GM12878 (cell line): ENCODE measurements at regions of chr11 and their contacts with region 1.

Region 1: DNA sequence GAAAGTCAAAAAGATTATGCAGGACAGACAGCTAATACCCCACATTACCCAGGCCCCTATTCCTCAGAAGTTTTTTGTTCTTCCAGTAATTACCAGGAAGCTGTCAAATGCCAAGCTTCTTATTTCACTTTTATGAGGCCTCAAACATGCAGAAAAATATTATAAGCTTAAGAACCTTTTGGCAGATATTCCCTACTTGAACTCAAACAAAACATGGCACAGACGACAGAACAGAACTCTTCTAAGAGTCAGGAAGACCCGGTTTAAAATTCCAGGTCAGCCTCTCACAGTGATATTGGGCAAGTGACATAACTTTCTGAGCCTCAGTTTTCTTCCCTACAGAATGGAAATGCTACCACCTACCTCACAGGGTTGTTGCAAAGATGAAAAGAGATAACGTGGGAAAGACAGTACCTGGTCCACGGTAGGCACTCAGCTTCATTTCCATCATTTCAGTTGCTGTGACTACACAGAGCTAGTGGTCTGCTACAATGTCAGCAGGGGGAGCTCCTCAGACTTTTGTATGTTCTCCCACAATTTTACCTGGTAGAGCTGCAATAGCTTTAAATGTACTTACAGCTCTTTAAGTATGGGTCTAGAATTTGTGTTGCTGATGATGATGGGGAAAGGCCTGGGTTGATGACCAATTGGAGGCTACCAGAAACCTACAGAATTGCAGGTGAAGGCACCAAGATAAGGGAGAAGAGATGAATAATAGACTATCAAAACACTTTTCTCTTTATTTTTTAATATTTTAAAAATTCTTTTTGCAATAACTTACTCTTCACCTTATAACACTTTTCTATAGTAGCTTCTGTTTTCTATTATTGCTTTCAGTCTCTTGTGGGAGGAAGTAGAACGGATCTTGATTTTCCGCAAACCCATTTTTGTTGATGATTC is 98.3 kb upstream of the CHRM4 start:
- DNase-seq: no peak
- ATAC-seq: peak; percentile 93
- H3K4me3 ChIP-seq: no peak overlapping the region
- H3K27ac ChIP-seq: peak overlapping the region; percentile 37; the same call in 1 of the 2 replicates
- H3K4me1 ChIP-seq: peaks cover 8% of the 10 kb centered on the region
- H3K27me3 ChIP-seq: no peaks in the 10 kb centered on the region
- CTCF ChIP-seq: peak; percentile 68 to 80 (median 68)
- EP300 ChIP-seq: no peak
- POLR2A ChIP-seq: no peak
- RAD21 ChIP-seq: peak; percentile 62

Region 2: GRCh38 chr11:46392421-46393230 is 97.3 kb before region 1 on chr11:
- CTCF ChIA-PET with region 1: interaction called, 15 read pairs
- POLR2A ChIA-PET with region 1: interaction called, 6 read pairs
- RAD21 ChIA-PET with region 1: interaction called, 11 read pairs
- SMC1A ChIA-PET with region 1: interaction called, 24 read pairs
- in situ Hi-C with region 1: no loop called
- intact Hi-C with region 1: no loop called
- DNase-seq: no peak
- ATAC-seq: peak; percentile 85
- H3K4me3 ChIP-seq: peak overlapping the region; percentile 57; the same call in 1 of the 2 replicates
- H3K27ac ChIP-seq: no peak overlapping the region
- H3K4me1 ChIP-seq: peaks cover 6% of the 10 kb centered on the region
- H3K27me3 ChIP-seq: peaks cover 12 to 13% of the 10 kb centered on the region in 2 experiments
- CTCF ChIP-seq: no peak
- EP300 ChIP-seq: no peak
- POLR2A ChIP-seq: no peak
- RAD21 ChIP-seq: no peak

Region 3: DNA sequence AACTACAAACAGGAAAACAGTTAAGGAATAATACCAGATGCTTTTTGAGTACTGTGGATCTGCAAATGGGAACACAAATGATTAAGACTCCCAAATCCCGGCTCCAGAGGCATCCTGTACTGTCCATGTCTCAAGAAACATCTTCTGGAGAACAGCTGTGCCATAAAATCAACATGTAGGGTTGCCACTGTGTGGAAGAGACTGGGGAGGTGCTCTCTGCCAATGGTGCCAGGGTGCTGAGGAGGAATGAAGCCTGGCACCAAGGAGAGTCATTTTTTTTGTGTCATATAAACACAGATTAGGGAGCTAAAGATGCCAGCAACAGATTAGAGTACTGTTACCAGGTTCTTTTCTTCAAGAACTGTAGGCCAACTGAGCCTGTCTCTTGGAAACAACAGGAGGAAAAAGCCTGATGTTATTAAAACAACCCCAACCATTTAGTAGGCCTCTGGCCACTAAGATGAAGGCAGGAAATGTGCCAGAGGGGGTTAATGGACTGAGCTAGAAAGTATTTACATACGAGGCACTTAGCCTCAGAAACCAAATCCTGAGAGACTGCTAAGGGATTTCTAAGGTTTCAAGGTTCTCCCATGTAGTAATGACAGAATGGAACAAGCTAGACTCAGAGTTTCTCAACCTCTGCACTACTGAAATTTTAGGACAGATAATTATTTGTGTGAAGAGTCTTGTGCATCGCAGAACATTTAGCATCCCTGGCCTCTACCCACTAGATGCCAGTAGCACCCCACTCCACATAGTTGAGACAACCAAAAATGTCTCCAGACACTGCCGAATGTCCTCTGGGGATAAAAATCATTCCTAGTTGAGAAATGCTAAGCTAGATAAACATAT is 43.8 kb before region 1 on chr11:
- CTCF ChIA-PET with region 1: interaction called, 39 read pairs
- POLR2A ChIA-PET with region 1: interaction called, 6 read pairs
- RAD21 ChIA-PET with region 1: interaction called, 24 read pairs
- SMC1A ChIA-PET with region 1: interaction called, 171 read pairs
- in situ Hi-C with region 1: no loop called
- intact Hi-C with region 1: no loop called
- DNase-seq: no peak
- ATAC-seq: peak; percentile 54; the same call in 2 of the 3 replicates
- H3K4me3 ChIP-seq: no peak overlapping the region
- H3K27ac ChIP-seq: no peak overlapping the region
- H3K4me1 ChIP-seq: no peaks in the 10 kb centered on the region
- H3K27me3 ChIP-seq: no peaks in the 10 kb centered on the region
- CTCF ChIP-seq: peak; percentile 17 to 47 (median 41); a peak in 4 of 6 replicates
- EP300 ChIP-seq: no peak
- POLR2A ChIP-seq: no peak
- RAD21 ChIP-seq: peak; percentile 50

Region 4: DNA sequence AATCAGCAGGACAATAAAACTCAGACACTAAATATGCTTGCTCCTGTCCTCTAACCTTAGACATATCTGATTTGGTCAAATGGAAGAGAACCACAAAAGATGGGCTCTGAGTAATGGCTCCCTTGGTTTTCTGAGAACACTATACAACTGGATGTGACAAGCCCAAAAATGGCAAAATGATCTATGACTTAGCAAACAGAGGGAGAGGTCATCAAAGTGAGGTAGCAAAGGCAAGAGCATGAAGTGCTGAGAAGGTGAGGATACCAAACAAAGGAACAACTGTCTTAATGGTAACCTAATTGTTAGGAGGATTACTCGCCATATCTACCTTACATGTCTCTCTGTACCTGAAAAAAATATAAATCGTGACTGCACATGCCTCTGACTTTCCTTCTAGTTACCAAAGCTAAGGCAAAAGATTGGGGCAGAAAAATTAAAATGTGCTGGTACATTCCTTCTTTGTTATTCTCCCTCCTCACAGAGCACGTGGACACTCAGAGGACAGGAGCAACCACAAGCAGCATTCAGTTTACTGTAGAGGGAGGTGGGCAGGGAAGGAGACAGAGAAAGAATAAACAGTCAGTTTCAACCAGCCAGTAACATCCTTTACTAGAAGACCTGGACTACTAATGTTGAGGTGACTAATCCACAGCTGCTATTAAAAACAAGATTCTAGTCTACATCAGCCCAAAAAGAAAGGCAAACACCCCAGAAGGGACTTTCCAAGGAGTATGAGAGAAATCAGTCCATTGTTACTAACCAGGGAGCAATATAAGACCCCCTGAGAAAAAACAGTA is 15.1 kb after region 1 on chr11:
- CTCF ChIA-PET with region 1: interaction called, 136 read pairs
- POLR2A ChIA-PET with region 1: interaction called, 5 read pairs
- RAD21 ChIA-PET with region 1: interaction called, 30 read pairs
- SMC1A ChIA-PET with region 1: interaction called, 51 read pairs
- in situ Hi-C with region 1: no loop called
- intact Hi-C with region 1: no loop called
- DNase-seq: no peak
- ATAC-seq: peak; percentile 83
- H3K4me3 ChIP-seq: no peak overlapping the region
- H3K27ac ChIP-seq: peak overlapping the region; percentile 53
- H3K4me1 ChIP-seq: peaks cover 15% of the 10 kb centered on the region
- H3K27me3 ChIP-seq: no peaks in the 10 kb centered on the region
- CTCF ChIP-seq: no peak
- EP300 ChIP-seq: no peak
- POLR2A ChIP-seq: no peak
- RAD21 ChIP-seq: no peak

Region 5: GRCh38 chr11:46529095-46529905 is 39.4 kb after region 1 on chr11:
- CTCF ChIA-PET with region 1: interaction called, 146 read pairs
- POLR2A ChIA-PET with region 1: interaction called, 11 read pairs
- RAD21 ChIA-PET with region 1: interaction called, 67 read pairs
- SMC1A ChIA-PET with region 1: interaction called, 108 read pairs
- in situ Hi-C with region 1: no loop called
- intact Hi-C with region 1: loop called (anchors 2 kb)
- DNase-seq: no peak
- ATAC-seq: peak; percentile 98
- H3K4me3 ChIP-seq: no peak overlapping the region
- H3K27ac ChIP-seq: 0 out of 2 replicates have a peak overlapping the region, but pooled peaks have one; percentile 4
- H3K4me1 ChIP-seq: no peaks in the 10 kb centered on the region; the same call in 1 of the 2 replicates
- H3K27me3 ChIP-seq: no peaks in the 10 kb centered on the region
- CTCF ChIP-seq: peak; percentile 88 to 94 (median 93); a peak in 5 of 6 replicates
- EP300 ChIP-seq: no peak
- POLR2A ChIP-seq: no peak
- RAD21 ChIP-seq: peak; percentile 70

Region 6: GRCh38 chr11:46616998-46617675 is 127.2 kb after region 1 on chr11 and contains the starts of genes ATG13 and HARBI1:
- CTCF ChIA-PET with region 1: interaction called, 30 read pairs
- POLR2A ChIA-PET with region 1: interaction called, 4 read pairs
- RAD21 ChIA-PET with region 1: interaction called, 14 read pairs
- SMC1A ChIA-PET with region 1: interaction called, 6 read pairs
- in situ Hi-C with region 1: no loop called
- intact Hi-C with region 1: no loop called
- DNase-seq: peak; percentile 55
- ATAC-seq: peak; percentile 98
- H3K4me3 ChIP-seq: peak within 1 kb of the TSS; percentile 82
- H3K27ac ChIP-seq: peak within 1 kb of the TSS; percentile 99
- H3K4me1 ChIP-seq: peaks cover 7% of the 10 kb centered on the region; the same call in 1 of the 2 replicates
- H3K27me3 ChIP-seq: no peaks in the 10 kb centered on the region
- CTCF ChIP-seq: no peak
- EP300 ChIP-seq: peak in 1 of 2 experiments; percentile 100; a peak in 2 of 4 replicates
- POLR2A ChIP-seq: peak; percentile 85
- RAD21 ChIP-seq: no peak
- polyA plus RNA-seq, gene ATG13: 10.9 to 13.6 TPM
- polyA plus RNA-seq, gene HARBI1: 5.1 to 7.5 TPM